PC-9 (cell line): ENCODE measurements at regions of chr15 and their contacts with region 1.

Region 1: GRCh38 chr15:96273317-96274086 is 57.0 kb upstream of the NR2F2 start:
- DNase-seq: peak; percentile 85 to 100
- H3K4me3 ChIP-seq: no peak overlapping the region; the same call in 1 of the 2 replicates
- H3K27ac ChIP-seq: peak overlapping the region; percentile 95
- H3K4me1 ChIP-seq: peaks cover 86% of the 10 kb centered on the region
- H3K27me3 ChIP-seq: no peaks in the 10 kb centered on the region
- CTCF ChIP-seq: no peak

Region 2: GRCh38 chr15:96170979-96171739 is 102.3 kb before region 1 on chr15:
- CTCF ChIA-PET with region 1: no interaction called
- POLR2A ChIA-PET with region 1: no interaction called
- intact Hi-C with region 1: loop called (anchors 5 kb)
- DNase-seq: peak in 1 of 2 experiments; percentile 14
- H3K4me3 ChIP-seq: no peak overlapping the region
- H3K27ac ChIP-seq: no peak overlapping the region
- H3K4me1 ChIP-seq: no peaks in the 10 kb centered on the region
- H3K27me3 ChIP-seq: no peaks in the 10 kb centered on the region
- CTCF ChIP-seq: no peak

Region 3: GRCh38 chr15:96296264-96296663 is 22.8 kb after region 1 on chr15:
- CTCF ChIA-PET with region 1: no interaction called
- POLR2A ChIA-PET with region 1: no interaction called
- intact Hi-C with region 1: no loop called
- DNase-seq: no peak
- H3K4me3 ChIP-seq: no peak overlapping the region
- H3K27ac ChIP-seq: no peak overlapping the region
- H3K4me1 ChIP-seq: no peaks in the 10 kb centered on the region
- H3K27me3 ChIP-seq: no peaks in the 10 kb centered on the region
- CTCF ChIP-seq: no peak